ENCODE measurements at regions of chr9 and their contacts with region 1.

Region 1: GRCh38 chr9:96566498-96567207 is 53.0 kb downstream of the CDC14B start:
- DNase-seq: peak; percentile 93
- H3K4me3 Mint-ChIP-seq: peak overlapping the region; percentile 83
- H3K27ac Mint-ChIP-seq: peak overlapping the region; percentile 68
- H3K4me1 Mint-ChIP-seq: peaks cover 20% of the 10 kb centered on the region
- H3K27me3 Mint-ChIP-seq: peaks cover 31% of the 10 kb centered on the region

Region 2: DNA sequence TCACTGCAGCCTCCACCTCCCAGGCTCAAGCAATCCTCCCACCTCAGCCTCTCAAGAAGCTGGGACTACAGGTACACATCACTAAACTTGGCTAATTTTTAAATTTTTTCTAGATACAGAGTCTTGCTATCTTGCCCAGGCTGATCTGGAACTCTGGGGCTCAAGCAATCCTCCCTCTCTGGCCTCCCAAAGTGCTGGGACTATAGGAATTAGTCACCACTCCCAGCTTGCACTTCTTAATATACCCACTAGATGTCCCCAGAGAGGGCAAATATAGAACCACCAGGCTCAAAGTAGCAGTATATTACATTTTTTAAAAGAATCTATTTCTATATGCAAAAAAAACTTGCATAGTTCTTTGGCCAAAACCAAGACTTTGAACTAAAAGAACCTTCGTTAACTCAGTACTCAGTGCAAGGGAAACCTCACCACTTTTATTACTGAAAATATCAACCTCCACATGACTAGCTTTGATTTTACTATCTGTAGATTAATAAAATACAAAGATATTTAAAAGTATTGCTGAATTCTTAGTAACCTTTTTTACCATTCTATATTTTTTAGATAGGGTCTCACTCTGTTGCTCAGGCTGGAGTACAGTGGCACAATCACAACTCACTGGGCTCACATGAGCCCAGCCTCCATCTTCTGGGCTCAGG is 238.8 kb before region 1 on chr9:
- intact Hi-C with region 1: loop called (anchors 5 kb)
- DNase-seq: peak; percentile 86
- H3K4me3 Mint-ChIP-seq: no peak overlapping the region
- H3K27ac Mint-ChIP-seq: no peak overlapping the region
- H3K4me1 Mint-ChIP-seq: no peaks in the 10 kb centered on the region
- H3K27me3 Mint-ChIP-seq: peaks cover 2% of the 10 kb centered on the region

Region 3: DNA sequence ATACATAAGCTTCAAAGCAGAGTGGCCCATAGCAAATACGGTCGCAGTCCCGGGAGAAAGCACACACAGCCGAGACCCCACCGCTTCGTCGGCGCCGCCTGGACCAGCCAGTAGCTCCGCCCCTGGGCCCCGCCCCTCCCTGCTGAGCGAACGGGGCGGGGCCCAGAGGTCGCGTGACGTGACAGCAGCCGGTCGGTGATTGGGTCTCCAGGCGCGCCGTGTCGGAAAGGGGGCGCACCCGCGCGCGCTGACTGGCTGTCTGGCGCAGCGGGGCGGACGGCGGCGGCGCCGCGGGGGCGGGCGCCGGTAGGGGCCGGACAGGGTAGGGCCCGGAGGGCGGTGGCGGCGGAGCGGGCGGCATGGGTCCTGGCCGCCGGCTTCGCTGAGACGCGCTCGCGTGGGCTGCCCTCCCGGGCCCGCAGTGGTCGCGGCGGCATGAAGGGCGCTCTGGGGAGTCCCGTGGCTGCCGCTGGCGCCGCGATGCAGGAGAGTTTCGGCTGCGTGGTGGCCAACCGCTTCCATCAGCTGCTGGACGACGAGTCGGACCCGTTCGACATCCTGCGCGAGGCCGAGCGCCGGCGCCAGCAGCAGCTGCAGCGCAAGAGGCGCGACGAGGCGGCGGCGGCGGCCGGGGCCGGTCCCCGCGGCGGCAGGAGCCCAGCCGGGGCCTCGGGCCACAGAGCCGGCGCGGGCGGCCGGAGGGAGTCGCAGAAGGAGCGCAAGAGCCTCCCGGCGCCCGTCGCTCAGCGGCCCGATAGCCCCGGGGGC is 116.6 kb before region 1 on chr9 and contains the start of gene HABP4:
- intact Hi-C with region 1: loop called (anchors 2 kb)
- DNase-seq: peak; percentile 99
- H3K4me3 Mint-ChIP-seq: peak within 1 kb of the TSS; percentile 89
- H3K27ac Mint-ChIP-seq: peak within 1 kb of the TSS; percentile 56
- H3K4me1 Mint-ChIP-seq: peaks cover 18% of the 10 kb centered on the region
- H3K27me3 Mint-ChIP-seq: peaks cover 29% of the 10 kb centered on the region
- total RNA-seq, gene HABP4: 8.8 and 9.1 TPM in 2 replicates

Region 4: DNA sequence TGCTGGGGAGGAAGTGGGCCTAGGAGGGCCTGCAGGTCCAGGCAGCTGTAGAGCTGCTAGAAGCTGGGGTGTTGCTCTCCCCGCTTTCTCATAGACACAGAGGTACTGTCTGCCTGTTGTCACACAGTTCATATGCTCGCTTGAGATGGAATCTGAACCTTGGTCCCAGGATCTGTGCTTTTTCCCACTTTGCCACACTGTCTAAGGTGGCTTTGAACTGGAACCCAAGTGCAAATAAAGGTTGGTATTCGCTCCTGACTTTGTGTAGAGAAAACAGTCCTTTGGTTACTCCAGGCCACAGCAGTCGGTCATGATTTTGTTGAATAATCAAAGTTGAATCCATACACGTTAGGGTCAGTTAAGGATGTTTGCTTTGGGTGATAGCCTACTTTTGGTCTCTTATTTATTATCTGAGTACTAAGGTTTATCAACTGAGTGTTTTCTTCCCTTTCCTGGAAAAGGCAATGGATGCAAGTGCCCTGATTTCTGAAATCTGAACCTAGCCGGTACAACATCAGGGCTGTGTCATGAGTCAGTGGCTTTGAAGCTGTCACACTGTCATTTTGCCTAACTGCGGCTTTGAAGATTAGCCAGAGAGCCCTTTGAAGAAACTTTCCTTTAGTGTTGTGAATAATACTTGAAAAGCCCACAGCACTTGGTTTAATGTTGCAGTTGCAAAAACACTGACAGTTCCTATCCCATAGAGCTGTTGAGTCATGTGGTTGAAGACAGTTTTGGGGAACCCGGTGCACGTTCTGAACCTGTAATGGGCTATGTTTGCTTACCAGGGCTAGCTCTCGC is 75.4 kb before region 1 on chr9:
- intact Hi-C with region 1: loop called (anchors 5 kb)
- DNase-seq: peak; percentile 64
- H3K4me3 Mint-ChIP-seq: peak overlapping the region; percentile 44
- H3K27ac Mint-ChIP-seq: peak overlapping the region; percentile 71
- H3K4me1 Mint-ChIP-seq: peaks cover 6% of the 10 kb centered on the region
- H3K27me3 Mint-ChIP-seq: no peaks in the 10 kb centered on the region

Region 5: GRCh38 chr9:96553070-96553469 is 13.6 kb before region 1 on chr9:
- intact Hi-C with region 1: loop called (anchors 1 kb)
- DNase-seq: no peak
- H3K4me3 Mint-ChIP-seq: no peak overlapping the region
- H3K27ac Mint-ChIP-seq: peak overlapping the region; percentile 60
- H3K4me1 Mint-ChIP-seq: peaks cover 13% of the 10 kb centered on the region
- H3K27me3 Mint-ChIP-seq: peaks cover 2% of the 10 kb centered on the region

Region 6: GRCh38 chr9:96654443-96655197 is 88.0 kb after region 1 on chr9:
- intact Hi-C with region 1: loop called (anchors 5 kb)
- DNase-seq: peak; percentile 88
- H3K4me3 Mint-ChIP-seq: peak overlapping the region; percentile 89
- H3K27ac Mint-ChIP-seq: peak overlapping the region; percentile 88
- H3K4me1 Mint-ChIP-seq: peaks cover 12% of the 10 kb centered on the region
- H3K27me3 Mint-ChIP-seq: peaks cover 10% of the 10 kb centered on the region

Measured in activated CD4-positive, alpha-beta T cell treated with anti-CD3 and anti-CD28 coated beads, Interleukin-2, amount 10 ng/mL, durations not matched to agents 24 days and 14 days (primary cell).